Psoas muscle (tissue), 8 donors: ENCODE measurements at regions of chr16 and their contacts with region 1.

Region 1: GRCh38 chr16:21959050-21959449 is 5.9 kb downstream of the UQCRC2 start:
- DNase-seq: no peak
- ATAC-seq: no peak
- H3K4me3 ChIP-seq: no peak overlapping the region
- H3K27ac ChIP-seq: no peak overlapping the region
- H3K4me1 ChIP-seq: peaks cover 26% of the 10 kb centered on the region
- H3K27me3 ChIP-seq: no peaks in the 10 kb centered on the region
- CTCF ChIP-seq: no peak

Region 2: GRCh38 chr16:21971856-21972255 is 12.8 kb after region 1 on chr16:
- intact Hi-C with region 1: loop called in 1 of 2 experiments (anchors 2 kb)
- DNase-seq: no peak
- ATAC-seq: no peak
- H3K4me3 ChIP-seq: no peak overlapping the region
- H3K27ac ChIP-seq: no peak overlapping the region
- H3K4me1 ChIP-seq: no peaks in the 10 kb centered on the region
- H3K27me3 ChIP-seq: no peaks in the 10 kb centered on the region
- CTCF ChIP-seq: no peak

Region 3: GRCh38 chr16:21990381-21990944 is 31.4 kb after region 1 on chr16:
- intact Hi-C with region 1: loop called in 1 of 2 experiments (anchors 5 kb)
- DNase-seq: no peak
- ATAC-seq: no peak
- H3K4me3 ChIP-seq: no peak overlapping the region
- H3K27ac ChIP-seq: no peak overlapping the region
- H3K4me1 ChIP-seq: peaks cover 19% of the 10 kb centered on the region
- H3K27me3 ChIP-seq: no peaks in the 10 kb centered on the region
- CTCF ChIP-seq: no peak

Region 4: DNA sequence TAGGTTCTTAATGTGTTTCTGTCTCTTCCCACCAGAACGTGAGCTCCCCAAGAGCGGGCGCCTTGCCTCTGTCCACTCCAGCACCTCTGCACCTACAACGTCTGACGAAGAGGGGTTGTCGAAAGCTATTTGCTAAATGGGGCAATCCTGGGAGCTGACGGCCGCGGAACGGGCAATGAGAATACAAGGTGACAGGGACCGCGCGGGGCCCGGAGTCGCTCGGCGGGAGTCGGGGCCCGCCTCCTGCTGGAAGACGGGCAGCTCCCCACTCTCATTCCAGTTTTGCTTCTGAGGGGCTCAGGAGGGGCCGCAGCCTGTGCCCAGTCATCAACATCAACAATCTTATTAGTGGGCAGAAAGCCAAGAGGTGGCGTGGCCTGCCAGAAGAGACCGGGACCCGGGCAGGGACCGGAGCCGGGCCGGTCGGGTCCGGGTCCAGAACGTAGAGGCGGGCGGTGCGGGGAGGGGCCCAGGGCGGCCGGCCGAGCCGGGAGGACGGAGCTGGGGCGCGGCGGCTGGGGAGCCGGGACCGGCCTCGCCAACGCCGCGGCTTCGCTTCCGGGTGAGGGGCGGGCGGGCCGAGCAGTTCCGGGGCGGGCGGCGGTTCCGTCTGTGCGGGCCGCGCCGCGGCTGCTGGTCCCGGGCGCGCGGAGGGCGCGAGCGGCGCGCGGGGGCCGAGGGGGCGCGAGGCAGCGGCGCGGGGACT is 48.6 kb after region 1 on chr16 and contains the start of gene MOSMO:
- intact Hi-C with region 1: no loop called
- DNase-seq: peak; percentile 82 to 86
- ATAC-seq: peak; percentile 89 to 94 (median 92)
- H3K4me3 ChIP-seq: peak within 1 kb of the TSS; percentile 99
- H3K27ac ChIP-seq: peak within 1 kb of the TSS; percentile 95
- H3K4me1 ChIP-seq: peaks cover 35% of the 10 kb centered on the region
- H3K27me3 ChIP-seq: no peaks in the 10 kb centered on the region
- CTCF ChIP-seq: no peak
- total RNA-seq, gene MOSMO: 7.8 to 13.8 (median 10.5) TPM

Region 5: GRCh38 chr16:22117609-22118008 is 158.6 kb after region 1 on chr16:
- intact Hi-C with region 1: no loop called
- DNase-seq: no peak
- ATAC-seq: no peak
- H3K4me3 ChIP-seq: no peak overlapping the region
- H3K27ac ChIP-seq: no peak overlapping the region
- H3K4me1 ChIP-seq: no peaks in the 10 kb centered on the region
- H3K27me3 ChIP-seq: no peaks in the 10 kb centered on the region
- CTCF ChIP-seq: no peak

Region 6: GRCh38 chr16:23663918-23664317 is 1704.9 kb after region 1 on chr16:
- intact Hi-C with region 1: no loop called
- DNase-seq: no peak
- ATAC-seq: no peak
- H3K4me3 ChIP-seq: no peak overlapping the region
- H3K27ac ChIP-seq: no peak overlapping the region
- H3K4me1 ChIP-seq: no peaks in the 10 kb centered on the region
- H3K27me3 ChIP-seq: no peaks in the 10 kb centered on the region
- CTCF ChIP-seq: no peak